Activated naive CD4-positive, alpha-beta T cell treated with anti-CD3 and anti-CD28 coated beads for 36 hours (primary cell): ENCODE measurements at regions of chr10 and their contacts with region 1.

Region 1: DNA sequence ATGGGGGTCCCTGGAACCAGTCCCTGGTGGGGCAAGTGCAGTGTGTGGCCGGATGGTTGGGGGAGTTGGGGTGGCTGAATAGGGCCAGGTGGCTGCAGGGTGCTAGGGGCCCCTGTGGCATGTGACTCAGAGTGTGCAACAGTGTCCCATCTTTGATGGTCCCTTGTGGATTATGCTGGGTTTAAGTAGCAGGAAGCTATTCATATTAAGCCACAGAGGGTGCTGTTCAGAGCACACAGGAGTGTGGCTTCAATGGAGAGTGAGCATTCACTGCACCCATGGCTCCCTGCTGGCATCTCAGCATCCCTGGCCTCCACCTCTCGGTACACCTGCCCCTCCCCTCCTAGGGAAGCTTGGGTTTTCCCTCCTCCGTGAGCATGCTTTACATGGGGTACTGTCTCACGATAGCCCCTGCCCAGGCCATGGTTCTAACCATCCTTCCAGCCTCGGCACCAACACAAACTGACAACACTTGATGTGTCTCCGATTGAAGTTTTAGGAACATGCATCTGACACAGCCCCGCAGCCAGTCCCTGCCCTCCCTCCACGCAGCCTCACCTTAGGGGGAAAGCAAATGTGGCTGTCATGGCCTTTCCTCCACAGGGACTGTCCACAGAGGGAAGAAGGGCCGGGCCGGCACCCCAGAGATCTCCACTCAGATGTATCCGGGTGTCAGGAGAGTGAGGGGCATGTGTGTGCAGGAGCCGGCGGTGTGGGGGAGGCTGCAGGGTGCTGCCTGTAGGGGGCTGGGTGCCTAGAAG is 30.4 kb upstream of the PPIF start:
- DNase-seq: peak; percentile 47
- H3K4me3 Mint-ChIP-seq: no peak overlapping the region
- H3K27ac Mint-ChIP-seq: peak overlapping the region; percentile 56
- H3K4me1 Mint-ChIP-seq: peaks cover 60% of the 10 kb centered on the region
- H3K27me3 Mint-ChIP-seq: peaks cover 2% of the 10 kb centered on the region

Region 2: DNA sequence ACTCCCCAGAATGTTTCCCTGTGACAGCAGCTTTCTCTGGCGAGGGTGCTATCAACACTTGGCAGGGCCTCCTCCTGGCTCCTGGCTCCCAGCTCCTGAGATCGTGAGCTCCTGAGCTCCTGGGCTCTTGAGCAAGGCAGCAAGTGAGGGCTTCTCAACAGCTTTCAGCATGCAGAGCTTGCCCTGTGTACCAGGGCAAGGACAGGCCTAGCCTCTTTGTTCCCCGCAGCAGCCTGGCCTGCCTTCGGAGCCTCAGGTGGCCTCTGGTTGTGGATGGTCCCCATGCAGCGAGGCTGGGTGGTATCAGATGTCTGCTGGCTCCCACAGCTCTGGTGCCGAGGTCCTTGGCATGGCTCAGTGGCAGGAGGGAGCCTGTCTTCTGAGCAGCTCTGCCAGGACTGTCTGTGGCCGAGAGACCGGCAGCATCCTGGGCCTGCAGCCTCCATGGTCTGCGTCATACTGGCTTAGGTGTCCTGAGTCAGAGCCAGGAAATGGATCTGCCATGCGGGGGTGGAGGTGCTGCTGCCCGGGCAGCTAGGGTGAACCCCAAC is 203.9 kb before region 1 on chr10:
- CTCF ChIA-PET with region 1: no interaction called
- intact Hi-C with region 1: no loop called
- DNase-seq: no peak
- H3K4me3 Mint-ChIP-seq: no peak overlapping the region
- H3K27ac Mint-ChIP-seq: no peak overlapping the region
- H3K4me1 Mint-ChIP-seq: peaks cover 20% of the 10 kb centered on the region
- H3K27me3 Mint-ChIP-seq: no peaks in the 10 kb centered on the region

Region 3: DNA sequence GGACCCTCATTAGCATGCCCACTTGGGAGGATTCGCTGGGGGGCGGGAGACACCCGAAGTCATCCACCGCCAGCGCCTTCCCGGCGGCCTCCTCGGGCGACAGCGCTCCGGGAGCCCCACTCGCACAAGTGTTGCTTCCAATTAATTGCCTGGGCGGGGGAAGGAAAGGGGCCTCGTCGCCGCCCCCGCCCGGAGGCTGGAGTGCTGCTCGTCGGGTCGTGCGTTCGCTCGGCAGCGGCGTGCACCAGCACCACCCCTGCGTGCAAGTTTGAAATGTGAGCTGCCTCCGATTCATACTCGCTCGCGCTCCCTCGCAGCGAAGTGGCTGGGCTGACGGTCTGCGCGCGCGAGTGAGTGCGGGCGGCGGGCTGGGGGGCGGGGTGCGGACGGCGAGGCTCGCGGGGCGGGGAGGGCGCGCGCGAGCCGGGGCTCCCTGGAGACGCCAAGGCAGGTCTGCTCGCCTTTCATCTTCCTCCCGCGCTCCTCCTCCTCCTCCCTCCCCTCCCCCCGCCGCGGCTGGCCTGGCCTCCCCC is 74.2 kb before region 1 on chr10:
- CTCF ChIA-PET with region 1: interaction called, 4 read pairs
- intact Hi-C with region 1: loop called (anchors 1 kb)
- DNase-seq: peak; percentile 69
- H3K4me3 Mint-ChIP-seq: peak overlapping the region; percentile 78
- H3K27ac Mint-ChIP-seq: peak overlapping the region; percentile 56
- H3K4me1 Mint-ChIP-seq: peaks cover 45% of the 10 kb centered on the region
- H3K27me3 Mint-ChIP-seq: no peaks in the 10 kb centered on the region

Region 4: GRCh38 chr10:79331709-79332108 is 14.9 kb after region 1 on chr10:
- CTCF ChIA-PET with region 1: interaction called, 14 read pairs
- intact Hi-C with region 1: loop called (anchors 1 kb)
- DNase-seq: peak; percentile 95
- H3K4me3 Mint-ChIP-seq: peak overlapping the region; percentile 28
- H3K27ac Mint-ChIP-seq: peak overlapping the region; percentile 93
- H3K4me1 Mint-ChIP-seq: peaks cover 43% of the 10 kb centered on the region
- H3K27me3 Mint-ChIP-seq: no peaks in the 10 kb centered on the region